Caco-2 (cell line): ENCODE measurements at regions of chr21 and their contacts with region 1.

Region 1: DNA sequence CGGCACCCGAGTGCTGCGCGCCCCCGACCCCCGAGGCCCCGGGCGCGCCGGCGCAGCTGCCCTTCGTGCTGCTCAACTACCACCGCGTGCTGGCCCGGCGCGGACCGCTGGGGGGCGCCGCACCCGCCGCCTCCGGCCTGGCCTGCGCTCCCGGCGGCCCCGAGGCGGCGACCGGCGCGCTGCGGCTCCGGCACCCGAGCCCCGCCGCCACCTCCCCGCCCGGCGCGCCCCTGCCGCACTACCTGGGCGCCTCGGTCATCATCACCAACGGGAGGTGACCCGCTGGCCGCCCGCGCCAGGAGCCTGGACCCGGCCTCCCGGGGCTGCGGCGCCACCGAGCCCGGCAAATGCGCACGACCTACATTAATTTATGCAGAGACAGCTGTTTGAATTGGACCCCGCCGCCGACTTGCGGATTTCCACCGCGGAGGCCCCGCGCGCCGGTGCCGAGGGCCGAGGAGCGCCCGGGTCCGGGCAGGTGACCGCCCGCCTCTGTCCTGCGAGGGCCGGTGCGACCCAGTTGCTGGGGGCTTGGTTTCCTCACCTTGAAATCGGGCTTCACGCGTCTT is 49.0 kb downstream of the SIM2 start:
- DNase-seq: peak; percentile 65 to 91
- H3K4me3 ChIP-seq: peak overlapping the region; percentile 63
- H3K4me3 Mint-ChIP-seq: peak overlapping the region; percentile 76
- H3K27ac Mint-ChIP-seq: peak overlapping the region; percentile 97
- H3K4me1 ChIP-seq: peaks cover 31% of the 10 kb centered on the region
- H3K4me1 Mint-ChIP-seq: peaks cover 11% of the 10 kb centered on the region
- H3K27me3 ChIP-seq: no peaks in the 10 kb centered on the region
- H3K27me3 Mint-ChIP-seq: no peaks in the 10 kb centered on the region
- CTCF ChIP-seq: peak in 1 of 2 experiments; percentile 23

Region 2: GRCh38 chr21:36640721-36641244 is 107.1 kb before region 1 on chr21:
- CTCF ChIA-PET with region 1: no interaction called
- POLR2A ChIA-PET with region 1: no interaction called
- intact Hi-C with region 1: loop called (anchors 5 kb)
- DNase-seq: peak in 1 of 2 experiments; percentile 11
- H3K4me3 ChIP-seq: no peak overlapping the region
- H3K4me3 Mint-ChIP-seq: no peak overlapping the region
- H3K27ac Mint-ChIP-seq: peak overlapping the region; percentile 63
- H3K4me1 ChIP-seq: peaks cover 13% of the 10 kb centered on the region
- H3K4me1 Mint-ChIP-seq: peaks cover 20% of the 10 kb centered on the region
- H3K27me3 ChIP-seq: no peaks in the 10 kb centered on the region
- H3K27me3 Mint-ChIP-seq: no peaks in the 10 kb centered on the region
- CTCF ChIP-seq: peak in 1 of 2 experiments; percentile 11

Region 3: GRCh38 chr21:36698981-36699891 is 48.7 kb before region 1 on chr21 and contains the start of gene SIM2:
- CTCF ChIA-PET with region 1: no interaction called
- POLR2A ChIA-PET with region 1: no interaction called
- intact Hi-C with region 1: loop called (anchors 2 kb)
- DNase-seq: peak; percentile 79 to 81
- H3K4me3 ChIP-seq: peak within 1 kb of the TSS; percentile 85
- H3K4me3 Mint-ChIP-seq: peak within 1 kb of the TSS; percentile 78
- H3K27ac Mint-ChIP-seq: peak within 1 kb of the TSS; percentile 74
- H3K4me1 ChIP-seq: no peaks in the 10 kb centered on the region
- H3K4me1 Mint-ChIP-seq: peaks cover 7% of the 10 kb centered on the region
- H3K27me3 ChIP-seq: no peaks in the 10 kb centered on the region
- H3K27me3 Mint-ChIP-seq: no peaks in the 10 kb centered on the region
- CTCF ChIP-seq: no peak
- total RNA-seq, gene SIM2: 9.4 and 11.5 TPM in 2 replicates

Region 4: DNA sequence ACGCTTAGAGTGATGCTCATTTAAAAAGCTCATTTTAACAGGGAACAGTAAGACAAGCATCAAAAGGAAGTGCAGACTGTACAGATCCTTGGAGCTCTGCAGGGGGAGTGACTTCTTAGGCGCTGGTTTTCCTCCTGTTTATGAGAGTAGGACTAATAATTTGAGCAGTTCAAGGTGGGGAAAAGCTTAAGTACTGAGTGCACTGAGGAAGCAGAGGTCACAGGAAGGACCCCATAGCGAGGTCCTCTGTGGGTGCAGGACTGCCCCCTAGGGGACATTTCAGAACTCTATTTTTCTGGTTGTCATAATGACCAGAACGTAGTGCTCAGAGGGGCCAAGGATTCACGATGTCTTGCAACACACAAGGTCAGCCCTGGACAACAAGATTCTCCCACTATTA is 106.5 kb after region 1 on chr21:
- CTCF ChIA-PET with region 1: interaction called, 3 read pairs
- POLR2A ChIA-PET with region 1: no interaction called
- intact Hi-C with region 1: loop called (anchors 5 kb)
- DNase-seq: peak in 1 of 2 experiments; percentile 66
- H3K4me3 ChIP-seq: no peak overlapping the region
- H3K4me3 Mint-ChIP-seq: no peak overlapping the region
- H3K27ac Mint-ChIP-seq: no peak overlapping the region
- H3K4me1 ChIP-seq: peaks cover 16% of the 10 kb centered on the region
- H3K4me1 Mint-ChIP-seq: peaks cover 7% of the 10 kb centered on the region
- H3K27me3 ChIP-seq: no peaks in the 10 kb centered on the region
- H3K27me3 Mint-ChIP-seq: no peaks in the 10 kb centered on the region
- CTCF ChIP-seq: peak; percentile 39 to 82

Region 5: GRCh38 chr21:36927719-36928117 is 179.8 kb after region 1 on chr21:
- CTCF ChIA-PET with region 1: no interaction called
- POLR2A ChIA-PET with region 1: no interaction called
- intact Hi-C with region 1: loop called (anchors 2 kb)
- DNase-seq: peak; percentile 78 to 79
- H3K4me3 ChIP-seq: no peak overlapping the region
- H3K4me3 Mint-ChIP-seq: no peak overlapping the region
- H3K27ac Mint-ChIP-seq: no peak overlapping the region
- H3K4me1 ChIP-seq: peaks cover 11% of the 10 kb centered on the region; the same call in 1 of the 2 replicates
- H3K4me1 Mint-ChIP-seq: peaks cover 20% of the 10 kb centered on the region
- H3K27me3 ChIP-seq: no peaks in the 10 kb centered on the region
- H3K27me3 Mint-ChIP-seq: no peaks in the 10 kb centered on the region
- CTCF ChIP-seq: peak; percentile 87 to 88